Sigmoid colon (tissue), 7 donors: ENCODE measurements at regions of chr7 and their contacts with region 1.

Region 1: GRCh38 chr7:157336383-157337315 is at the start of gene DNAJB6:
- DNase-seq: peak; percentile 96
- H3K4me3 ChIP-seq: peak within 1 kb of the TSS; percentile 68 to 93 (median 90)
- H3K27ac ChIP-seq: peak within 1 kb of the TSS; percentile 97 to 100 (median 99)
- H3K4me1 ChIP-seq: peaks cover 2 to 45% (median 39%) of the 10 kb centered on the region in 4 donors
- H3K27me3 ChIP-seq: no peaks in the 10 kb centered on the region
- CTCF ChIP-seq: no peak
- EP300 ChIP-seq: peak in 2 of 4 donors; percentile 36 to 93
- POLR2A ChIP-seq: peak; percentile 84 to 92
- total RNA-seq, gene DNAJB6: 120 to 145 (median 129) TPM

Region 2: DNA sequence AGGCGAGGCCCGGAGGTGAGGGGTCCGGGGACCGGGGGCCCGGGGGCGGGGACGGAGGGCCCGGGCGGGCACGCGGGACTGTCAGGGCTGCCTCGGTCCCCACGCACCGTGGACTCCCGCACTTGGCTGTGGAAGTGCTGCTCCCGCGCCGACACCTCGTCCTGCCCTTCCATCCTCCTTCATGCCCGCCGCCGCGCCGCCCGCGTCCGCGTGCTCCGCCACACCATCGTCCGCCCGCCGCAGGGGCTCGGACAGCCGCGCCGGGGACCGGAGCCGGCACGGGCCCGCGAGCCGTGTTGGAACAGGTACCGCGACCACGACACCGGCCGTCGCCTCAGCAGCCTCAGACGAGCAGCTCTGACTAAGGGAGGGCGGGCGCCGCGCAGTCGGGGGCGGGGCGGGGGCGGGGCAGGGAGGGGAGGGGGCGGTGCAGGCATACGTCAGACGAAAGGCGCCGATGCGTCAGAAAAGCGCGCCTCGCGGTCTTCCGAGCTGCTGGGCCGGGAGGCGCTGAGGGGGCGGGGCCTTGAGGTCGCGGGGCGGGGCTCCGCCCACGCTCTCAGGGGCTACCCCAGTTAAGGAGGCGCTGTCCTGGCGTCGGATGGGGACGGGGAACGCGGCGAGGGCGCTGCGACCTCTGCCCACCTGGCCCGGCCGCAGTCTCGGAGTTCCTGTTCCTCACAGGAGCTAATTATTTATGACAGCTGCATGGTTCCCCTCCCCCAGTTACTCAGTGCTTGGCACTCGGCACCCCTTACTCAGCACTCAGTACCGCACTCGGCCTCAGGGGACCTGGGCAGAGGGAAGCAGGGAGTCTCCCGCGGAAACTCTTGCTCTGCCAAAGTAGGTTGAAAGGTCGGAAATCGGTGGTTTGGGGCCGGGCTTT is 443.6 kb before region 1 on chr7 and contains the start of gene LMBR1:
- intact Hi-C with region 1: loop called (anchors 10 kb)
- DNase-seq: peak; percentile 97
- H3K4me3 ChIP-seq: peak within 1 kb of the TSS; percentile 58 to 94 (median 84)
- H3K27ac ChIP-seq: peak within 1 kb of the TSS; percentile 91 to 97 (median 92)
- H3K4me1 ChIP-seq: peaks cover 0 to 17% (median 9%) of the 10 kb centered on the region in 4 donors
- H3K27me3 ChIP-seq: no peaks in the 10 kb centered on the region
- CTCF ChIP-seq: peak; percentile 67 to 97 (median 84)
- EP300 ChIP-seq: peak in 1 of 4 donors; percentile 43
- POLR2A ChIP-seq: peak in 1 of 2 donors; percentile 38
- total RNA-seq, gene LMBR1: 43.9 to 60.9 (median 51.2) TPM

Region 3: DNA sequence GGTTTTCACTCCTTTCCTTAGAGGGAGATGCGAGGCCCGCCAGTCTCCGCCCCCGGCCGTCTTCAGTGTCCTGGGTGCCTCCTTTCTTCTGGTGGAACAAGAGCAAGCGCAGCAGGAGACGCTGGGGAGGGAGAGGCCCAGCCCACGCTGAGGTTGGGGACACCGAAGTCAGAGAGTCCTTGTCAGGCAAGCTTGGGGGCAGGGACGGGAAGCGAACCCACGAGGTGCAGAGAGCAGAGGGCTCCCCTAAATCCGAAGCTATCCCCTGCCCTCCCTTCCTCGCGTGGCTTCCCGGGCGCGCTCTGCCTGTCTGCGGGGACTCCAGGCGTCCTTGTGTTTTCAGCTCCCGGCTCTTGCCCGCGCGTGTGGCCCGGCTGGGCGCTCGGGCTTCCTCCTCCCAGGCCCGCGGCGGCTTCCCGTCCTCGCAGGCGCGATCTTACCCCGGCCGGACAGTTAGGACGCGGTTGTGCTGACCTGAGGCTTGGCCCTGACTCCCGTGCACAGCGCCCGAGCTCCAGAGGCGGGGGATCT is 258.5 kb before region 1 on chr7:
- intact Hi-C with region 1: no loop called
- DNase-seq: no peak
- H3K4me3 ChIP-seq: no peak overlapping the region
- H3K27ac ChIP-seq: no peak overlapping the region
- H3K4me1 ChIP-seq: peaks cover 0 to 8% (median 0%) of the 10 kb centered on the region in 4 donors
- H3K27me3 ChIP-seq: peaks cover 4 to 71% (median 22%) of the 10 kb centered on the region in 3 donors
- CTCF ChIP-seq: no peak
- EP300 ChIP-seq: no peak
- POLR2A ChIP-seq: no peak

Region 4: DNA sequence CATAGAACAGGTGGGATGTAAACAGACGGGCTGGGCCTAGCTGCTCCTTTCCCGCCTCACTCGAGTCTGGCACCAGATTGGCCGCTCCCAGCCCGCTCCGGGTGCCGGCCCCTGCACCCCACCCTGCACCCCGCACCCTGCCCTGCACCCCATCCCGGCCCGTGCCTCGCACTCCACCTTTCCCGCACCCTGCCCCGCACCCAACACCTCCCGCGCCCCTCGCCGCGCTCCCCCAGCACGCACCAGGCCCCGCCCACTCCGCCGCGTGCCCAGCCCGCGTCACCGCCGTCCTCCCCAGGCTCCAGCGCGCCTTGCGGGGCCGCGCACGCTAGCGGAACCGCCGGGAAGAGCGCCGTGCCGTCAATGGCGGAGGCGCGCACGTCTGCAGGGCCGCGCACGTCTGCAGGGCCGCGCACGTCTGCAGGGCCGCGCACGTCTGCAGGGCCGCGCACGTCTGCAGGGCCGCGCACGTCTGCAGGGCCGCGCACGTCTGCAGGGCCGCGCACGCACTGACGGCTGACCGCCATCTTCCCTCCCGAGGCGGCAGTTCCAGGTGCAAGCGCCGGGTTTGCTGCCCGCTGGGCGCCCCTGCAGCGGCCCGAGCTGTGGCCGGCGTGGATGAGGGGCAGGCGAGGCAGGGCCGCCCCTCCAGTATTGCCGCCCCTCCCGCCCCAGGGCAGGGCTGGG is 198.1 kb before region 1 on chr7 and contains the start of gene UBE3C:
- intact Hi-C with region 1: loop called (anchors 10 kb)
- DNase-seq: peak; percentile 93
- H3K4me3 ChIP-seq: peak within 1 kb of the TSS; percentile 61 to 80 (median 72)
- H3K27ac ChIP-seq: peak within 1 kb of the TSS; percentile 88 to 94 (median 90)
- H3K4me1 ChIP-seq: peaks cover 0 to 34% (median 25%) of the 10 kb centered on the region in 4 donors
- H3K27me3 ChIP-seq: no peaks in the 10 kb centered on the region
- CTCF ChIP-seq: no peak
- EP300 ChIP-seq: no peak
- POLR2A ChIP-seq: peak in 1 of 2 donors; percentile 13
- total RNA-seq, gene UBE3C: 55.7 to 84.2 (median 70.5) TPM

Region 5: DNA sequence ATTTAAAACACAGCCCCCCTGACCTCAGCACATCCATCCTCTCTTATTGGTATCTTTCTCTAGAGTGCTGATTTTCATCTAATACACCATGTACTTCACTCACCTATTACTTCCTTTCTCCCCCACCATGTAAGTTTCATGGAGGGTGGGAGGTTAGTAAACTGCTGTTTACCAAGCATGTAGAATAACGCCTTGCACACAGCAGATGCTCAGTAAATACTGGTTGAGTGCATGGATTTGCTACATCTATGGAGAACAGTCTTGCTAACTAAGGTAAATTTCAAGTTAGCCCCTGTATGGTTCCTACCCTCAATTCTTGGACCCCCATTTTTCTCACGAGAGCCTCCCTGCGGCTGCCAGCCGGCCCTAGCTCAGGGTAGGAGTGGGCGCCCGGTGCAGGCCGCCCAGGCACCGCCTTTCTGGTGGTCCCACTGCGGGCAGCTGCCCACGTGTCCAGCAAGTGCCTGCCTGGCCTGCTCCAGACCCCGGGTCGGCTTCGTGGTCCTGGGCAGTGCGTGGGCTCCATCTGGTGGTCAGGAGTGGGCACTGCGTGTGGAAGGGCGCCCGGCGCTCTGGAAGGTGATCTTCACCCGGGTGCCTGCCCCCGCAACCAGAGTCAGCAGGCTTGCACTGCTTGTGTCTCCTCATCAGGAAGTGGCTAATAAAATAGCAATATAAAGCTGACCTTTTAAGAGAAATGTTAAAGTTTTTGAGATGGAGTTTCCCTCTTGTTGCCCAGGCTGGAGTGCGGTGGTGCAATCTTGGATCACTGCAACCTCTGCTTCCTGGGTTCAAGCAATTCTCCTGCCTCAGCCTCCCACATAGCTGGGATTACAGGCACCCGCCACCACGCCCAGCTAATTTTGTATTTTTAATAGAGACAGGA is 63.2 kb before region 1 on chr7:
- intact Hi-C with region 1: loop called (anchors 2 kb)
- DNase-seq: peak; percentile 85
- H3K4me3 ChIP-seq: no peak overlapping the region
- H3K27ac ChIP-seq: peak overlapping the region in 1 of 4 donors; percentile 78
- H3K4me1 ChIP-seq: peaks cover 0 to 35% (median 27%) of the 10 kb centered on the region in 4 donors
- H3K27me3 ChIP-seq: peaks cover 0 to 4% (median under 1%) of the 10 kb centered on the region in 3 donors
- CTCF ChIP-seq: peak; percentile 85 to 99 (median 90)
- EP300 ChIP-seq: no peak
- POLR2A ChIP-seq: no peak

Region 6: DNA sequence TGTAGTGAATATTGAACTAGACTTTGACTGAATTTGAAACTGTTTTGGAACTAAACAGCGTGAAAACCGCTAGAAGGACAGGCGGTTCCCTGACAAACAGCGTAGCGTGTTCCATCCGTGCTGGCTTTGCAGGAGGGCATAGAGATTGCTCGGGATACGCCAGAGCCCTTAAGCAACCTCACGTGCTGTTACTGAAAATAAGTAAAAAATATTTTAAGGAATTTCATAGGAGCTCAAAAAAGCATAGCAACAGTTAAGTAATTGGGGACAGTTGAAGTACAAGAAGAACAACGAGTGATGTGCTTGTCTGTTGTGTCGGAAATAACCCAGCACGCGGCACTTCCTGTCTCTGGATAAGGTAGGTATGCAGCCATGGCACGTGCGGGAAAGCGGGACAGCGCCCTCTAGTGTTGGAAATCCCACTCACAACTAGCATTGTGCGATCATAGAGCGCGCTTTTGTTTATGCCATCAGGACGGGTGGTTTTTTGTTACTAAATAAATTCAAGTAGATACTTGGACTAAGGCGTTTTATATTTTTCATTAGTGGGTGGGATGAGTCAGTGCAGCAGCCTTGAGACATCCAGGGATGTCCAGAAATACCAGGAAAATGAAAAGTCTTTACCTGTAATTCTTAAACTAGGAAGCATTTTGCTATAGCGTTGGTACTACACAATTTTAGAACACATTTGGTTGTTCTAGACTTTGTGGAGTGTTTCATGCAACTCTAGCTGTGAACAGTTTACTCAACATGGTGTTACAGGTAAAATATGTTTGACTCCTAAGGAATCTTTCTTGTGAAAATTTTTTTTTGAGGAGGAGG is 50.5 kb after region 1 on chr7:
- intact Hi-C with region 1: loop called (anchors 5 kb)
- DNase-seq: peak; percentile 91
- H3K4me3 ChIP-seq: no peak overlapping the region
- H3K27ac ChIP-seq: peak overlapping the region in 3 of 4 donors; percentile 34 to 61 (median 55)
- H3K4me1 ChIP-seq: peaks cover 0 to 17% (median 8%) of the 10 kb centered on the region in 4 donors
- H3K27me3 ChIP-seq: no peaks in the 10 kb centered on the region
- CTCF ChIP-seq: peak; percentile 56 to 92 (median 84)
- EP300 ChIP-seq: peak in 1 of 4 donors; percentile 20
- POLR2A ChIP-seq: no peak